ENCODE measurements at regions of chr18 and their contacts with region 1.

Region 1: DNA sequence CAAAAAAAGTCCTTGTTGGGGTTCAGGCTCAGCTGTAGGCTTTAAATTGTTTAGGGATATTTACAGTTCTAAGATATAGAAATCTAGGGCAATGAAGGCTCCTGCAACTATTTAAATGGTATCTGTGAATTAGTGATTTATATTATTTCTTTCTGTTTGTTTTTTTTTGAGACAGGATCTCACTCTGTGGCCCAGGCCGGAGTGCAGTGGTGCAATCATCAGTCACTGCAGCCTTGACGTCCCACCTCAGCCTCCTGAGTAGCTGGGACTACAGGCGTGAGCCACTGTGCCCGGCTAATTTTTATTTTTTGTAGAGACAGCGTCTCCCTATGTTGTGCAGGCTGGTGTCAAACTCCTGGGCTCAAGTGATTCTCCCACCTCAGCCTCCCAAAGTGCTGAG is 32.3 kb upstream of the NDUFV2 start:
- DNase-seq: no peak

Region 2: DNA sequence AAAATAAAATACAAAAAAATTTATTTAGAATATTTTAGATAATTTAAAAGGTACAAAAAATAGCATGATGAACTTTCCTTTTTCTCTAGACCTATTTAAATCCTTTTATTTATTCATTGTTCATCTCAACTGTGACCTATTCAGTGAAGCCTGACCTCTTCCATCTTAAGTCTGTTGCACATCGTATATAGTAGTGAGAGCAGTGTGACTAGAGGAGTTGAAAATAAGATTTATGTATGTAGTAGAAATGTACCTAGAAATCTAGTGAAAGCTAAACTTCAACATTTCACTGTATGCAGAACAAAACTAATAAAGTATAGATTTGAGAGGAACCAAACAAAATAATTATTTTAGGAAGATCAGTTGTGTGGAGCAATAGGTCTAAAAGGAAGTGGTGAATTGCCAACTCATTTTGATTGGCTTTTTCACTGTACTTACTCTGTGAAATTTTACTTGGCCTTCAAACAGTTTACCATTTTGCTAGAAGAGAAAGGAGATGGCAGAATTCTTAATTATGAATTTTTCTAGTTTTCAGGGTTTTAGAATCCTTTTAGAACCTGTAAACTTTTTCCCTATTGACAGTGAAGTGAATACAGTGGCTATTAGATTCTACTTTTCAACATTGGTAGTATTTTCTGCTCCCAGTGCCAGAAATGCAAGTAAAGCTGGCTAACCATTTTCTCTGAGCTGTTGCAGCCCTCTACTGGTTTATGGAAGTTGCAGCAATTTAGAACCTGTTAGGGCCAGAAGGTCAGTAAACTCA is 77.4 kb after region 1 on chr18:
- intact Hi-C with region 1: loop called in 1 of 2 experiments (anchors 5 kb)
- DNase-seq: no peak

Region 3: GRCh38 chr18:9260388-9261380 is 190.5 kb after region 1 on chr18:
- intact Hi-C with region 1: no loop called
- DNase-seq: no peak

Region 4: DNA sequence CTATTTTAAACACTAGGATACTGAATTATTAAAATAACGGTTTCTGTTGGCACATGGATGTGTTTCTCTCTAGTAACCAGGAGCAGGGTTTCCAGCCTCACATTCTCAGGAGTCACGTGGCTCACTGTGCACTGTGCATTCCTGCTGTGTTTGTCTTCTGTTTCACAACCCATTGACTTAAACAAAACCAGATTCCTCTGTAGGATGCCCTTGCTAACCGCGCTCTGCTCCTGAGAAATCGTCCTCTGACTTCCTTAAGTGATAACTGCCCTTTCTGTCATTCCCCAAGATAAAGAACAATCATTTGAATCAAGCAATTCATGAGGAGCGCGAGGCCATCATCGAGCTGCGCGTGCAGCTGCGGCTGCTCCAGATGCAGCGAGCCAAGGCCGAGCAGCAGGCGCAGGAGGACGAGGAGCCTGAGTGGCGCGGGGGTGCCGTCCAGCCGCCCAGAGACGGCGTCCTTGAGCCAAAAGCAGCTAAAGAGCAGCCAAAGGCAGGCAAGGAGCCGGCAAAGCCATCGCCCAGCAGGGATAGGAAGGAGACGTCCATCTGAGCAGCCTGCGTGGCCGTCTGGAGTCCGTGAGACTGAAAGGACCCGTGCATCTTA is 465.3 kb after region 1 on chr18:
- intact Hi-C with region 1: no loop called
- DNase-seq: no peak